Heart right ventricle (tissue), 16 donors: ENCODE measurements at regions of chr1 and their contacts with region 1.

Region 1: DNA sequence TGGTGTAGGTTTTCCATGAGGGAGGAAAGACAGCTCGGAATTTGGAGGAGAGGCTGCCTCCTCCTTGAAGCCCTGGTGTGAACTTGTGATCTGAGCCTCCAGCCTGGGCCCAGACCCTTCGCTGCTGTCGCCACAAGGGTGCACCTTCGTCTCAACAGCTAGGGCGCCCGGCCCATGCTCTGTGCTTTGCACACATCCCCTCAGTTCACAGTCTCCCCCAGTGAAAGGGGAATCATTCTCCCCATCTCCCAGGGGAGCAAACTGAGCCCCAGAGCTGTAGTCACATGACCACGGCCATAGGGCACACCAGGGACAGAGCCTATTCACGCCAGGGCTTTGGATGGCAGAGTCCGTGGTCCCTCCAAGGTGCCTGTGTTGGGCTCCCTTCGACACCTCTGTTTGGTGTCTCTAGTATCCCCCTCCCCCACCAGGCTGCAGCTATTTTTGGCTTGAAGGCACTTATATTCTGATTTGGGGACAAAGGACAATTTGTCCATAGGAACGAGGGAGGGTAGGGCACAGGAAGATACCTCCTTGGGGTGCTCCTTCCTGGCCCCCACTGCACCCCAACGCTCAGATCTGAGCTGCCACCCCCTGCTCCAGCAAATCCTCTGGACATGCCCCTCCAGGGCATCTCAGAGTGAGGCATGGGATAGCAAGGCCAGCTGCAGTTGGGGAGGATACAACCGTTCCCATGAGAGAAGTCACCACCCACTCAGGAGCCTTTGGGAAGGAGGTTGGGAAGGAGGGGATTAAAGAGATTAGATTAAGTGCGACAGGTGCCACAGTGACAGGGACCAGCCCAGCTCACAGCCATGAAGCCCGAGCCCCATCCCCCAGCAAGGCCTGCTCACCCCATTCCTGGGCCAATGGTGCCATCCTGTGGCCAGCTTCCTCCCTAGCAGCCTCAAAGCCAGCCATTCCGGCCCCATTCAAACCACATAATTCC is 15.7 kb downstream of the MATN1 start:
- DNase-seq: peak; percentile 58 to 77
- ATAC-seq: peak; percentile 71 to 90 (median 86)
- H3K4me3 ChIP-seq: no peak overlapping the region
- H3K27ac ChIP-seq: no peak overlapping the region
- H3K4me1 ChIP-seq: peaks cover 0 to 26% (median 12%) of the 10 kb centered on the region in 9 donors
- H3K27me3 ChIP-seq: peaks cover 0 to 24% (median 6%) of the 10 kb centered on the region in 7 donors
- CTCF ChIP-seq: peak; percentile 34 to 83 (median 81)

Region 2: GRCh38 chr1:28886731-28887418 is 1820.8 kb before region 1 on chr1:
- intact Hi-C with region 1: loop called in 2 of 10 experiments (anchors 10 kb)
- DNase-seq: peak; percentile 80 to 86
- ATAC-seq: peak; percentile 79 to 89 (median 84)
- H3K4me3 ChIP-seq: peak overlapping the region; percentile 53 to 99 (median 88)
- H3K27ac ChIP-seq: peak overlapping the region; percentile 34 to 93 (median 86)
- H3K4me1 ChIP-seq: peaks cover 0 to 45% (median 16%) of the 10 kb centered on the region in 9 donors
- H3K27me3 ChIP-seq: peaks cover 0 to 6% (median 0%) of the 10 kb centered on the region in 7 donors
- CTCF ChIP-seq: no peak

Region 3: GRCh38 chr1:29245876-29246275 is 1461.8 kb before region 1 on chr1:
- intact Hi-C with region 1: loop called in 1 of 10 experiments (anchors 10 kb)
- DNase-seq: no peak
- ATAC-seq: peak in 2 of 8 donors; percentile 50 to 54
- H3K4me3 ChIP-seq: no peak overlapping the region
- H3K27ac ChIP-seq: no peak overlapping the region
- H3K4me1 ChIP-seq: peaks cover 0 to 4% (median 0%) of the 10 kb centered on the region in 9 donors
- H3K27me3 ChIP-seq: no peaks in the 10 kb centered on the region
- CTCF ChIP-seq: peak in 8 of 9 donors; percentile 6 to 47 (median 36)

Region 4: DNA sequence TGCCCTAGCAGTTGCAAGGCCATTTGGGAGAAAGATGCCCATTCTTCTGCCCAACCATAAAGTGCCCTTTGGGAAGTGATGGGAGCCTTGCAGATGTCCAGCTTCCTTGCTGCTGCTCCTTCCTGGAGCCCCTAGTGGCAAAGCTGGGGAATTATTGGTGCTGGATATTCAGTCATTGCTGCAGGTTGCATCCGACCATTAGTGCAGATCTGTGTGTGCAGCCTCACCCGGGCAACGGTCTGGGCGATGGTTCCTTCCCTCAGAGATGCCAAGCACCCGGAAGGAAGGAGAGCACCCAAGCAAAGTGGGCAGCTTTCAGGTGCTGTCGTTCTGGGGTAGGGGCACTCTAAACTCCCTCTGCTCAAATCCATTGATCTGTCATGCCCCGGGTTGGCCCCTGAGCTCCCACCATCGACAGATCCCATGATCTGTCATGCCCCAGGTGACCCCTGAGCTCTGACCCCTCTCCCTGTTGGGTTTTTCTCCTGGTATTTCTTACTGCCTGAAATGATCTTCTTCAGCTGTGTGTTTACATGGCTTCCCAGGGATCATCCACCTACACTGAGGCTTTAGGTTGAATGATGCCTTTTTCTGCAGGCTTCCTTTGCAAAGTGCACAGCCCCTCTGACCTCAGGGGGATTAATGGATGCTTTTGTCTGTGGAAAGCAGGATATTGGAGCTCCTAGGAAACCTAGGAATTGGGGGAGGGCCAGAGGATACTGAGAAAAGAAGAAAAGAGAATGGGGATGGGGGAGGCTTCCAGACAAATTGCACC is 1003.9 kb before region 1 on chr1:
- intact Hi-C with region 1: loop called in 1 of 10 experiments (anchors 10 kb)
- DNase-seq: no peak
- ATAC-seq: no peak
- H3K4me3 ChIP-seq: no peak overlapping the region
- H3K27ac ChIP-seq: no peak overlapping the region
- H3K4me1 ChIP-seq: peaks cover 0 to 15% (median 0%) of the 10 kb centered on the region in 9 donors
- H3K27me3 ChIP-seq: peaks cover 0 to 56% (median 40%) of the 10 kb centered on the region in 7 donors
- CTCF ChIP-seq: peak; percentile 6 to 67 (median 57)

Region 5: GRCh38 chr1:29812408-29813135 is 895.1 kb before region 1 on chr1:
- intact Hi-C with region 1: loop called in 2 of 10 experiments (anchors 10 kb)
- DNase-seq: no peak
- ATAC-seq: peak in 2 of 8 donors; percentile 61 to 65
- H3K4me3 ChIP-seq: no peak overlapping the region
- H3K27ac ChIP-seq: no peak overlapping the region
- H3K4me1 ChIP-seq: peaks cover 0 to 11% (median 2%) of the 10 kb centered on the region in 9 donors
- H3K27me3 ChIP-seq: peaks cover 0 to 4% (median 0%) of the 10 kb centered on the region in 7 donors
- CTCF ChIP-seq: no peak

Region 6: GRCh38 chr1:30111431-30111830 is 596.3 kb before region 1 on chr1:
- intact Hi-C with region 1: loop called in 1 of 10 experiments (anchors 10 kb)
- DNase-seq: peak; percentile 36 to 50
- ATAC-seq: peak; percentile 52 to 87 (median 80)
- H3K4me3 ChIP-seq: no peak overlapping the region
- H3K27ac ChIP-seq: no peak overlapping the region
- H3K4me1 ChIP-seq: peaks cover 0 to 5% (median 0%) of the 10 kb centered on the region in 9 donors
- H3K27me3 ChIP-seq: peaks cover 0 to 79% (median 68%) of the 10 kb centered on the region in 7 donors
- CTCF ChIP-seq: peak; percentile 22 to 77 (median 65)

Region 7: GRCh38 chr1:30399026-30399425 is 308.7 kb before region 1 on chr1:
- intact Hi-C with region 1: loop called in 1 of 10 experiments (anchors 10 kb)
- DNase-seq: no peak
- ATAC-seq: no peak
- H3K4me3 ChIP-seq: no peak overlapping the region
- H3K27ac ChIP-seq: no peak overlapping the region
- H3K4me1 ChIP-seq: peaks cover 0 to 4% (median 0%) of the 10 kb centered on the region in 9 donors
- H3K27me3 ChIP-seq: peaks cover 0 to 6% (median 0%) of the 10 kb centered on the region in 7 donors
- CTCF ChIP-seq: no peak

Region 8: DNA sequence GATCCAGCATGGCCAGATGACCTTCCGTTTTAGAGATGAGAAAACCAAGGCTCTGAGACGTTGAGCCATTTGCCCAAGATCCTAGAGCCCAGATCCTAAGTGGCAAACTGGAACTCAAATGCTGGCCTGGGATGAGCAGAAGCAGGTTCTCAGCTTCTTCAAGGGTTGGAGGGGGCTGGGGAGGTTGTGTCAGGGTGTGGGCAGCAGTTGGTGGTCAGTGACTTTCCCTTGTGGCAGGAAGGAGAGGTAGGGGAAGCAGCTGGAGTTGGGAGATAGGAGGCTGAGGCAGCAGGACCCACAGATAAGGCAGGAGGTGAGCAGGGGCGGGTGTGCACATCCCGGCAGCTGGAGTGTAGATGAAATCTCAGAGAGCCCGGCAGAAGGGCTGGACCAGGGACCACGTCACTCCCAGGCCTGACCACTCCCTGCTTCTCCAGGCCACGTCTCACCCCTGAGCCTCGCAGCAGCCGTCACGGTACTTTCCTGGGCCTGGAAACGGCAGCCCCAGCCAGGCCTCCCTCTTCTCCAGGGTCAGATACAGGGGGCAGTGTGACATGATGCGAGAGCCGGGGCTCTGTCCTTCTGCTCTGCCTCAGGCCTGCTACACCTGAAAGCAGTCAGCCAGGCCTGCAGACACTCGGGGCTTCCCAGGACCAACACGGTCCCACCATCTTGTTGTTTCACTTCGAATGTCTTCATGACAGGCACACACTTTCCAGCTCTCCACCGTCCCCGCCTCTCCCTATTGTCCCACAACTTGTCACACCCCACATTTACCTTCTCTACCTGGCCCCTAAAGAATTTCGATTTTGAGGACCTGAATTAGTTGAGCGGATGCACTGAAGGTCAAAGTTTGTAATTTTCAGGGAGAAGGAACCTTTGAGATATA is 61.4 kb after region 1 on chr1:
- intact Hi-C with region 1: no loop called
- DNase-seq: no peak
- ATAC-seq: peak in 6 of 8 donors; percentile 9 to 38 (median 37)
- H3K4me3 ChIP-seq: no peak overlapping the region
- H3K27ac ChIP-seq: no peak overlapping the region
- H3K4me1 ChIP-seq: no peaks in the 10 kb centered on the region
- H3K27me3 ChIP-seq: peaks cover 0 to 5% (median 0%) of the 10 kb centered on the region in 7 donors
- CTCF ChIP-seq: no peak

Region 9: GRCh38 chr1:30779294-30780071 is 71.8 kb after region 1 on chr1:
- intact Hi-C with region 1: no loop called
- DNase-seq: peak; percentile 78 to 86
- ATAC-seq: peak; percentile 53 to 81 (median 74)
- H3K4me3 ChIP-seq: no peak overlapping the region
- H3K27ac ChIP-seq: peak overlapping the region in 1 of 10 donors; percentile 80
- H3K4me1 ChIP-seq: peaks cover 0 to 49% (median 4%) of the 10 kb centered on the region in 9 donors
- H3K27me3 ChIP-seq: peaks cover 0 to 14% (median 0%) of the 10 kb centered on the region in 7 donors
- CTCF ChIP-seq: peak; percentile 91 to 98 (median 96)